T-cell (primary cell): ENCODE measurements at regions of chr12 and their contacts with region 1.

Region 1: DNA sequence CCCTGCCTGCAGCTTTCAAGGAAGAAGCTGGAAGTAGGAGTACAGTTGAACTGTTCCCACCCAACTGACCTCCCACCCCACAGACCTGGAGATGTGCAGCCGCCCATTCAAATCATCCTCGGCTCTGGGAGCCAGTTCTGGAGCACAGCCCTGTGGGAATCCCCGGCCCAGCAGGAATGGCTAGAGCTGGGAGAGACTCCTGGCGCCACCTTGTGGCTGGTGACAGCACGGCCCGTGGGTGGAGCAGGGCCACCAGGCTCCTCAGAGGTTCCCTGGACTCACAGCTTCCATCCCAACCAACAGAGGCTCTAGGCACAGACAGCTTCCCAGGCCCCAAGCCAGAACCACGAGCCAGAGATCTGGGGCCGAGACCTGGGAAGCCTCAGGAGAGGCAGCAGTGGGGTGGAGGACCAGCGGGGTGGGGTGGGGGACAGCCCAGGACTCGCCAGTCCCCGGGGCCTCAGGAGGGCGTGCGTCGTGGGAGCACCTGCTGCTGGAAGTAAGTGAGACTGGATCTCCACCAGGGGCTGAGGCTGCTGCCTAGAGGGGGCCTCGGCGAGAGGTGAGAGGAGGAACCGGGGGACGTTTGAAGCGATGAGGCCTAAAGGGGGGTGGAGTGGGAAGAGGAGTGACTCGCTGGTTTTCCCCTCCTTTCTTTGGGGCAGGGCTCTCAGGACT is 43.4 kb downstream of the RNF34 start:
- DNase-seq: peak in 34 of 35 experiments; percentile 27 to 73 (median 50)
- ATAC-seq: peak; percentile 66 to 80 (median 79)
- H3K4me3 ChIP-seq: no peak overlapping the region
- H3K4me3 Mint-ChIP-seq: no peak overlapping the region
- H3K27ac ChIP-seq: no peak overlapping the region
- H3K27ac Mint-ChIP-seq: no peak overlapping the region
- H3K4me1 ChIP-seq: peaks cover 0 to 5% of the 10 kb centered on the region in 2 experiments
- H3K4me1 Mint-ChIP-seq: peaks cover under 1 to 2% (median 2%) of the 10 kb centered on the region in 3 donors
- H3K27me3 ChIP-seq: no peaks in the 10 kb centered on the region
- H3K27me3 Mint-ChIP-seq: no peaks in the 10 kb centered on the region

Region 2: GRCh38 chr12:121334513-121335343 is 108.6 kb before region 1 on chr12:
- CTCF ChIA-PET with region 1: interaction called, 4 to 16 read pairs
- POLR2A ChIA-PET with region 1: no interaction called
- DNase-seq: peak in 9 of 35 experiments; percentile 5 to 71 (median 20)
- ATAC-seq: peak; percentile 54 to 79 (median 75)
- H3K4me3 ChIP-seq: no peak overlapping the region
- H3K4me3 Mint-ChIP-seq: no peak overlapping the region
- H3K27ac ChIP-seq: no peak overlapping the region
- H3K27ac Mint-ChIP-seq: no peak overlapping the region
- H3K4me1 ChIP-seq: peaks cover 0 to 2% of the 10 kb centered on the region in 2 experiments
- H3K4me1 Mint-ChIP-seq: peaks cover 3 to 4% (median 4%) of the 10 kb centered on the region in 3 donors
- H3K27me3 ChIP-seq: no peaks in the 10 kb centered on the region
- H3K27me3 Mint-ChIP-seq: no peaks in the 10 kb centered on the region

Region 3: DNA sequence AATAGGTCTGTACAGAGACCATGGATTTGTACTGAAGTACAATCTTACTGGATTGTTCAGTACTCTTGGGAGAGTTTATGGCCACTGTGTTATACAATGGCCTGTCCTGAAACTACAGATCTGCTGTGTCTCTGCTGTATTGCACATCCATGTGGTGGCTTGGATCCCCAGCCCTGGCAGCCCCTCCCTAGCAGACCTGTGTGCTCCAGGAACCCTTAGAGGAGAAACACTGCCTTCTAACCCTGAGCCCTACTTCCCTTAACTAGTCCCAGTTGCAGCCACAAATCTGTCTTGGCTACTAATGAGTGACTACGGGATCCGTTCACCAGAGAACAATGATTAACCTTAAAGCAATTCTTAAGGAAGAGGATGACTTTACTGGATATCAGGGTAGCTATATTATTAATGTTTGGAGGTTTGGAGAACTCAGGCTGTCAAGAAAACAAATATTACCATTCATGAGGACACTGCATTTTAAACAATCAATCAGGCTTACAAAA is 15.7 kb before region 1 on chr12:
- CTCF ChIA-PET with region 1: interaction called in 1 of 2 experiments, 15 read pairs
- POLR2A ChIA-PET with region 1: no interaction called
- DNase-seq: no peak
- ATAC-seq: no peak
- H3K4me3 ChIP-seq: no peak overlapping the region
- H3K4me3 Mint-ChIP-seq: no peak overlapping the region
- H3K27ac ChIP-seq: no peak overlapping the region
- H3K27ac Mint-ChIP-seq: peak overlapping the region in 1 of 2 donors; percentile 44
- H3K4me1 ChIP-seq: no peaks in the 10 kb centered on the region
- H3K4me1 Mint-ChIP-seq: peaks cover 0 to 4% (median 0%) of the 10 kb centered on the region in 3 donors
- H3K27me3 ChIP-seq: no peaks in the 10 kb centered on the region
- H3K27me3 Mint-ChIP-seq: no peaks in the 10 kb centered on the region

Region 4: DNA sequence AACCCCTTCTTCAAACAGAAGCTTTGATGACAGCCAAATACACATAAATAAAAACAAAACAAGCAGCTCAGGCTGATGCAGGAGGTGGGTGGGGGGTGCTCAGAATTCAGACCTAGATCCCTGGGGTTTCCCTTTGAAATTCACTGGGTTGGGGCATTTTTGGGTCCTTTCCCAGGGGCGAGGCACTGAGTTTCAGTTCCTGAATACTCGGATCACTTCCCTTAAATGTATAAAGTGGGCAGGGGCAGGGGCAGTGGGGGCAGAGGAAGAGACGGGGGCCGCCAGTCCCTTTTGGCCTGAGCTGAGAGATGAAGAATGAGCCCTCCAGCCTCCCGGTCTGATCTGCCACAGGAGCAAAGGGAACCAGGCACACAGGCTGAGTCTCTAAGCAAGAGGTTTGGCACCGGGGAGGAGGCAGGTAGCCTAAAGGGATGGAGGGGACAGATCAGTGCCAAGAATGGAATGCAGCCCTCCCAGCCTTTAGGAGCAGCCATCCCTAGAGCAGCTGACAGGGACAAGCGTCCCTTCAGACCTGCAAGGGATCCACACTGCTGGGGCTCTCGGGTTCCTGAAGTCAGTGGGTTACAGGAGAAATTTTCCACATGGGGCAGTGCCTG is 117.2 kb after region 1 on chr12:
- CTCF ChIA-PET with region 1: no interaction called
- POLR2A ChIA-PET with region 1: no interaction called
- DNase-seq: peak in 1 of 35 experiments; percentile 31
- ATAC-seq: no peak
- H3K4me3 ChIP-seq: no peak overlapping the region
- H3K4me3 Mint-ChIP-seq: no peak overlapping the region
- H3K27ac ChIP-seq: no peak overlapping the region
- H3K27ac Mint-ChIP-seq: no peak overlapping the region
- H3K4me1 ChIP-seq: peaks cover 2 to 19% of the 10 kb centered on the region in 2 experiments
- H3K4me1 Mint-ChIP-seq: peaks cover 10 to 20% (median 10%) of the 10 kb centered on the region in 3 donors
- H3K27me3 ChIP-seq: no peaks in the 10 kb centered on the region
- H3K27me3 Mint-ChIP-seq: no peaks in the 10 kb centered on the region